Activated T-helper 2 cell treated with anti-CD3 and anti-CD28 coated beads, Interferon-gamma antibody, Interleukin-2, Interleukin-4, amounts not matched to agents 10 μg/mL and 5 μg/mL and 100 μg/mL, durations not matched to agents 14 hours and 24 hours and 36 hours (primary cell): ENCODE measurements at regions of chr5 and their contacts with region 1.

Region 1: GRCh38 chr5:139482050-139482889 is at the start of gene STING1:
- DNase-seq: peak; percentile 55
- H3K4me3 Mint-ChIP-seq: peak within 1 kb of the TSS; percentile 88
- H3K27ac Mint-ChIP-seq: peak within 1 kb of the TSS; percentile 99
- H3K4me1 Mint-ChIP-seq: peaks cover 30% of the 10 kb centered on the region
- H3K27me3 Mint-ChIP-seq: no peaks in the 10 kb centered on the region
- total RNA-seq, gene STING1: 167 and 169 TPM in 2 replicates

Region 2: DNA sequence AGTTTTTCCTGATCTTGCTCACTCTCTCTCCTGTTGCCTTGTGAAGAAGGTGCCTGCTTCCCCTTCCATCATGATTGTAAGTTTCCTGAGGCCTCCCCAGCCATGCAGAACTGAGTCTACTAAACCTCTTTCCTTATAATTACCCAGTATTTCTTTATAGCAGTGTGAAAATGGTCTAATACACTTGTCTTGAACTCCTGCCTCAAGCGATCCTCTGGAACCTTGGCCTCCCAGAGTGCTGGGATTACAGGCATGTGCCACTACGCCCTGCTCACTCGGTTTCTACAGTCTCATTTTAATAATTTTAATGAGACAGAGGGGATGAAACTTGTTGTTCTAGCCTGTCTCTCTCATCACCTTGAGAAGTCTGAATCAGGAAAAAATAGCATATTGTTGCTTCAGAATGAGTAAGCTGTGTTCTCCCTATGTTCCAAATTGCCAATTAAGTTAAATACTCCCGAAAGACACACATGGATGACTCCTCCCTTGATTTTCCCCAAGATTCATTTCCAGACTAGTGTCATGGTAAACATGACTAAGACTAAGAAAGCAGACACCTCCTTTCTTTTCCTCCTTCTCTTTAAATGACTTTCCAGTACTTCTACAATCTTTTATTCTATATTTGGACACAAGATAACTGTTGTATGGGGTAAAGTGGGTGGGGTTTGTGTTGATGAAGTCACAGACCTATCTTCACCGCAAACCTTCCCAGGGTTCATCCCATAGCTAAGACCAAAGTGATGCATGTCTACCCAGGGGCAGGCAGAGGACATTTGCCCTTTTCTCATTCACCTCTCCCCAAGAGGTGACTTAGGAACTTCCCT is 35.1 kb before region 1 on chr5:
- intact Hi-C with region 1: loop called (anchors 2 kb)
- DNase-seq: no peak
- H3K4me3 Mint-ChIP-seq: peak overlapping the region; percentile 53
- H3K27ac Mint-ChIP-seq: peak overlapping the region; percentile 96
- H3K4me1 Mint-ChIP-seq: peaks cover 55% of the 10 kb centered on the region
- H3K27me3 Mint-ChIP-seq: no peaks in the 10 kb centered on the region

Region 3: GRCh38 chr5:139903795-139904565 is 421.7 kb after region 1 on chr5:
- intact Hi-C with region 1: no loop called
- DNase-seq: no peak
- H3K4me3 Mint-ChIP-seq: no peak overlapping the region
- H3K27ac Mint-ChIP-seq: no peak overlapping the region
- H3K4me1 Mint-ChIP-seq: no peaks in the 10 kb centered on the region
- H3K27me3 Mint-ChIP-seq: peaks cover 34% of the 10 kb centered on the region